Activated naive CD8-positive, alpha-beta T cell treated with anti-CD3 and anti-CD28 coated beads, Interleukin-2, amount 10 ng/mL, durations not matched to agents 7 days and 5 days (primary cell): ENCODE measurements at regions of chr6 and their contacts with region 1.

Region 1: DNA sequence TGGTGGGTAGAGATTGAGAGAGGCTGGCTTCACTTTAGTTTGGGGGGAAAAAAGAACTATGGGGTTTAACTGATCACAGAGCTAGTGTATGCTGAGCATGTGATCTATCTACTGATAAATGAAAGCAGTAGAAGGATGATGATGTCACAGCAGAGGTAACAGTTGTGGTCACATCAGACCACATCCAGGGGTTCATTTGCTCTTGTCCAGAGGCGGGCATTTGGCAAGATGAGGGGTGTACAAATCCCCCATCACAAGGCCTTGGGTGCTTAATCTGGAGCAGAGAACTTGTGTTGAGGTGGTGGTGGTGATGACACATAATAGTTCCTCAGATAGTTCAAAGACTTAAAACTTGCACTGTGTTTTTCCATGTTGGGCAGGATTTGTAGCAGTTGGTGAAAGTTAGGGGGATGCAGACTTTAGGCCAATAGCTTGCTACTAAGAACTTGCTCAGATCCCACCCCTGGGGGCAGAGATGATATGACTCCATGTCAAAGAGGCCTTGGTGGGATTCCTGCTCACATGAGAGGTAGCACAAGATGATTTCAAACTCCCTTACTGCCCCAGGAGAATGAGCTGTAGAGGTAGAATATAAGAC is 63.4 kb downstream of the PRDM1 start:
- DNase-seq: peak; percentile 48
- ATAC-seq: peak; percentile 87
- H3K4me3 Mint-ChIP-seq: peak overlapping the region; percentile 48
- H3K27ac Mint-ChIP-seq: peak overlapping the region; percentile 90
- H3K4me1 Mint-ChIP-seq: peaks cover 47% of the 10 kb centered on the region
- H3K27me3 Mint-ChIP-seq: no peaks in the 10 kb centered on the region

Region 2: GRCh38 chr6:106163446-106163965 is 13.9 kb after region 1 on chr6:
- POLR2A ChIA-PET with region 1: interaction called, 11 read pairs
- DNase-seq: no peak
- ATAC-seq: peak; percentile 76
- H3K4me3 Mint-ChIP-seq: peak overlapping the region; percentile 64
- H3K27ac Mint-ChIP-seq: peak overlapping the region; percentile 94
- H3K4me1 Mint-ChIP-seq: peaks cover 47% of the 10 kb centered on the region
- H3K27me3 Mint-ChIP-seq: no peaks in the 10 kb centered on the region

Region 3: DNA sequence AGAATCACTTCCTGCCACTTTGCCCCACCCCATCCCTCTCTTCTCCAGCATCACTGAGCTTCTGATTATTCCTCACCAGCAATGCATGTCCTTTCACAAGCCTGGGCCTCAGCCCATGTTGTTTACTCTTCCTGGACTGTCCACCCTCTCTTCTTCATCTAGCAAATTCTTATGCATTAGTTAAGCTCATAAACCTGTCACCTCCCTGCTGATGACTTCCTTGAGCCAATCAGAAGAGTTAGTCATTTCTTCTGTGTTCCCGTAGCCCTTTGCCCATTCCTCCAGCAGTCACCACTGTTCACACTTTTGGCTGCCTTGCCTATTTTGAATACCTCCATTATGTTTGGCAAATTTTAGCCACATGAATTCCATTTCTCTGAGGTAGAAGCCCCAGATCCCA is 206.8 kb after region 1 on chr6:
- POLR2A ChIA-PET with region 1: no interaction called
- DNase-seq: no peak
- ATAC-seq: no peak
- H3K4me3 Mint-ChIP-seq: no peak overlapping the region
- H3K27ac Mint-ChIP-seq: no peak overlapping the region
- H3K4me1 Mint-ChIP-seq: peaks cover 7% of the 10 kb centered on the region
- H3K27me3 Mint-ChIP-seq: peaks cover 72% of the 10 kb centered on the region